H1 (cell line): ENCODE measurements at regions of chrX and their contacts with region 1.

Region 1: GRCh38 chrX:153573984-153574383 is 25.0 kb downstream of the CCNQ start:
- DNase-seq: no peak
- H3K4me3 ChIP-seq: no peak overlapping the region
- H3K27ac ChIP-seq: no peak overlapping the region
- H3K4me1 ChIP-seq: peaks cover 0 to 6% (median 1%) of the 10 kb centered on the region in 4 experiments; a peak in 3 of 7 replicates
- H3K27me3 ChIP-seq: no peaks in the 10 kb centered on the region
- CTCF ChIP-seq: peak in 1 of 3 experiments; percentile 19; a peak in 2 of 4 replicates
- EP300 ChIP-seq: no peak
- POLR2A ChIP-seq: no peak
- RAD21 ChIP-seq: peak in 1 of 2 experiments; percentile 17; a peak in 1 of 4 replicates

Region 2: GRCh38 chrX:153554519-153555167 is 19.3 kb before region 1 on chrX:
- CTCF ChIA-PET with region 1: interaction called, 47 read pairs
- POLR2A ChIA-PET with region 1: no interaction called
- DNase-seq: peak in 1 of 2 experiments; percentile 69
- H3K4me3 ChIP-seq: no peak overlapping the region
- H3K27ac ChIP-seq: no peak overlapping the region
- H3K4me1 ChIP-seq: no peaks in the 10 kb centered on the region
- H3K27me3 ChIP-seq: no peaks in the 10 kb centered on the region; a peak in 1 of 7 replicates
- CTCF ChIP-seq: peak in 2 of 3 experiments; percentile 74 to 76; a peak in 3 of 4 replicates
- EP300 ChIP-seq: no peak
- POLR2A ChIP-seq: no peak
- RAD21 ChIP-seq: peak; percentile 63 to 76

Region 3: GRCh38 chrX:153791104-153791852 is 217.3 kb after region 1 on chrX:
- CTCF ChIA-PET with region 1: no interaction called
- POLR2A ChIA-PET with region 1: no interaction called
- DNase-seq: no peak
- H3K4me3 ChIP-seq: no peak overlapping the region
- H3K27ac ChIP-seq: no peak overlapping the region
- H3K4me1 ChIP-seq: peaks cover 0 to 17% (median 5%) of the 10 kb centered on the region in 4 experiments; a peak in 4 of 7 replicates
- H3K27me3 ChIP-seq: no peaks in the 10 kb centered on the region
- CTCF ChIP-seq: no peak
- EP300 ChIP-seq: no peak
- POLR2A ChIP-seq: no peak
- RAD21 ChIP-seq: no peak